ENCODE measurements at regions of chr4 and their contacts with region 1.

Region 1: DNA sequence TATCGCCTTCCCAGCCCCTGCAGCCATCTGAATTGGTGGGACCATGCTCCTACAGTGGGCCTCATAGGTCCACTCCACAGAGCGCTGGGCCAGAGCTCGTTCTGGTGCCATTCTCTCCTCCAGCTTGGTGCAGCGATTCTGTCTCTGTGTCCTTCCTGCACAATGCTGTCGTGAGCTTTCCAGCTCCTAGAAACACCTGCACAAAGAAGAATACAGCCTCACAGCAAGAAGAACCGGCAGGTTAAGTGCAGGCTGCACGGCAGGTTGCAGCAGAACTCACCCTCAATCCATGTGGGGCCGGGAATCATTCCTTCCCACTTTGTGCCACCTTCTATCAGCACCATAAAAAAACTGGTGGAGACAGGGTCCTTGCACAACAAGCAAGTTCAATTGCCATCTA is 101.2 kb upstream of the ENPP6 start:
- DNase-seq: no peak
- H3K4me3 Mint-ChIP-seq: no peak overlapping the region
- H3K27ac Mint-ChIP-seq: no peak overlapping the region
- H3K4me1 Mint-ChIP-seq: peaks cover 34% of the 10 kb centered on the region
- H3K27me3 Mint-ChIP-seq: peaks cover 1% of the 10 kb centered on the region

Region 2: DNA sequence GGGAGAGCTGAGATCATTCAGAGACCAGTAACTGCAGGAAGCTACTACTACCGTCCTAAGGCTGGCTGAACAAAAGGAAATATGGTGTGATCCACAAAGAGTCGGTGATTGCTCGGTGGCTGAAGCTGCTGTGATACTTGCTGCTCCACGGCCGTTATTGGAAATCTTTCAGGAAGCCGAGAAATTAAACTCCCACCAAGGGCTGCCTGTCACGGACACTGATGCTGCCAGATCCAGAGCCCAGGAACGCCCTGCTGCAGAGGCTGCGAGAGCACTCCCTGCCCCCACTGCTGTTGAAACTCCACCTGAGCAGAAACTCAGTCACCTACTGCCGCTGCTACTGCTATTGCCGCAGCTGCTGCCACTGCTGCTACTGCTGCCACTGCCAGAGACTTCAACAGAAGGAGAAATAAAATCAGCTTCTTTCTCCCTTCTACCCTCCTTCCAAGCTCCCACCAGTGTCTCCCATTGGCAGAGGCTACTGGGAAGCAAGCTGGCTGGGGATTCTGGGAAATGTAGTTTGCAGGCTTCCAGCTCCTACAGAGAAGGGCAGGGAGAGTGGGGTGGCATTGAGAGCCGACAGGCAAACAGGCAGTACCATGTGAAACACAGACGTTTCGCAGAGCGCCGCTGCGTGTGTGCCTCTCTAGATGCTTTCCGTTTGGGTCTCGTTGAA is 24.8 kb after region 1 on chr4:
- CTCF ChIA-PET with region 1: no interaction called
- POLR2A ChIA-PET with region 1: no interaction called
- intact Hi-C with region 1: loop called (anchors 2 kb)
- DNase-seq: peak; percentile 54
- H3K4me3 Mint-ChIP-seq: peak overlapping the region; percentile 77
- H3K27ac Mint-ChIP-seq: no peak overlapping the region
- H3K4me1 Mint-ChIP-seq: peaks cover 23% of the 10 kb centered on the region
- H3K27me3 Mint-ChIP-seq: no peaks in the 10 kb centered on the region

Region 3: DNA sequence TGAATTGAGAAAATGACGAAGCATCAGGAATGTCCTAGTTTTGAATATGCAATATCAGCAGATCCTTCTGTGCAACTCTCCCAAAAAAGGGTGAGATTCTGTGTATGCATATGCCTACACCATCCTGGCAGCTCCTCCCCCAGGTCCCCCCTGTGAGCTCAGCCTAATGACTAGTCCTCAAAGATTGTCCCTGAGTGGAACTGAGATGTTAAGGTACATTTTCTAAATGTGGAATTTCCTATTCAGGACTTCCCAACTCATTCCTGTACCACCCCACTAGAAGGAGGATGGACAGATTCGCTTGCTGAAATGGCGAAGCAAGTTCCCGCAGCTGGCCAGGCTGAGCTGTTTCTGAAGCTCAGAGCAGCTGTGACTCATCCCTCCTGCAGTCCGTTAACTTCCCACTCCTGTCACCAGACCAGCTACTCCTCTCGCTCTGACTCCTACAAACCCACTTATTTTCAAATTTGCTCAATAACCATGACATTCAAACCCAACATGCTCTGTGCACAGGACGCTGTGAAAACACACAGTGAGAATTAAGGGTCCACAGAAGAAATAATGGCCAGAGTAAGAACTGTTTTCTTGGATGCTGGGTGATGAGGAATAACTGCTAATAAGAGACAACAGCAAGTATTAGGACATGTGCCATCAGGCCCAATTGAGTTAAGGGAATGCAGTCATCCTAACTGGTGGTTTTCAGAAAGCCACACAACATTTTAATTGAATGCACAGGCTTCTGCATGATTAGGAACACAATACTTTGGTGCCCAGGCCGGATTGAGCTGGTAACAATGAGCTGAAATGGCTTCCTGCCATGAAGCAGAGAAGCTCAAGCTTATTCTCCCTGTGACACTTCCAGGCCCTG is 195.5 kb after region 1 on chr4:
- CTCF ChIA-PET with region 1: no interaction called
- POLR2A ChIA-PET with region 1: no interaction called
- intact Hi-C with region 1: loop called (anchors 1 kb)
- DNase-seq: peak; percentile 90
- H3K4me3 Mint-ChIP-seq: peak overlapping the region; percentile 38
- H3K27ac Mint-ChIP-seq: peak overlapping the region; percentile 88
- H3K4me1 Mint-ChIP-seq: peaks cover 42% of the 10 kb centered on the region
- H3K27me3 Mint-ChIP-seq: no peaks in the 10 kb centered on the region

Measured in activated CD4-positive, alpha-beta memory T cell treated with anti-CD3 and anti-CD28 coated beads for 36 hours (primary cell).